Vagina (tissue), 2 donors: ENCODE measurements at regions of chr14 and their contacts with region 1.

Region 1: GRCh38 chr14:102096214-102097114 is 9.6 kb upstream of the HSP90AA1 start:
- DNase-seq: no peak
- H3K4me3 ChIP-seq: no peak overlapping the region
- H3K27ac ChIP-seq: no peak overlapping the region
- H3K4me1 ChIP-seq: no peaks in the 10 kb centered on the region
- H3K27me3 ChIP-seq: no peaks in the 10 kb centered on the region
- CTCF ChIP-seq: peak; percentile 48 to 70 (median 66)
- POLR2A ChIP-seq: no peak

Region 2: GRCh38 chr14:102046343-102047278 is 49.9 kb before region 1 on chr14:
- intact Hi-C with region 1: loop called (anchors 5 kb)
- DNase-seq: no peak
- H3K4me3 ChIP-seq: no peak overlapping the region
- H3K27ac ChIP-seq: peak overlapping the region; percentile 52
- H3K4me1 ChIP-seq: no peaks in the 10 kb centered on the region
- H3K27me3 ChIP-seq: no peaks in the 10 kb centered on the region
- CTCF ChIP-seq: no peak
- POLR2A ChIP-seq: no peak